CD4-positive, alpha-beta T cell (primary cell): ENCODE measurements at regions of chr6 and their contacts with region 1.

Region 1: GRCh38 chr6:110179401-110180227 is at the start of gene WASF1:
- DNase-seq: peak; percentile 78 to 96 (median 86)
- ATAC-seq: peak; percentile 89
- H3K4me3 ChIP-seq: peak within 1 kb of the TSS; percentile 95
- H3K4me3 Mint-ChIP-seq: peak within 1 kb of the TSS; percentile 84
- H3K27ac ChIP-seq: peak within 1 kb of the TSS; percentile 74 to 78
- H3K27ac Mint-ChIP-seq: peak within 1 kb of the TSS; percentile 16
- H3K4me1 ChIP-seq: peaks cover 28% of the 10 kb centered on the region
- H3K4me1 Mint-ChIP-seq: peaks cover 12% of the 10 kb centered on the region
- H3K27me3 ChIP-seq: peaks cover 0 to 9% of the 10 kb centered on the region in 2 experiments
- H3K27me3 Mint-ChIP-seq: peaks cover 10% of the 10 kb centered on the region
- CTCF ChIP-seq: no peak
- total RNA-seq, gene WASF1: 0.19 to 0.22 TPM

Region 2: GRCh38 chr6:108782179-108783041 is 1397.2 kb before region 1 on chr6:
- CTCF ChIA-PET with region 1: no interaction called
- POLR2A ChIA-PET with region 1: no interaction called
- intact Hi-C with region 1: no loop called
- DNase-seq: peak; percentile 69 to 89 (median 75)
- ATAC-seq: peak; percentile 100
- H3K4me3 ChIP-seq: peak overlapping the region; percentile 45
- H3K4me3 Mint-ChIP-seq: peak overlapping the region; percentile 87
- H3K27ac ChIP-seq: no peak overlapping the region
- H3K27ac Mint-ChIP-seq: no peak overlapping the region
- H3K4me1 ChIP-seq: peaks cover 11% of the 10 kb centered on the region
- H3K4me1 Mint-ChIP-seq: peaks cover 11% of the 10 kb centered on the region
- H3K27me3 ChIP-seq: no peaks in the 10 kb centered on the region
- H3K27me3 Mint-ChIP-seq: no peaks in the 10 kb centered on the region
- CTCF ChIP-seq: peak; percentile 86

Region 3: DNA sequence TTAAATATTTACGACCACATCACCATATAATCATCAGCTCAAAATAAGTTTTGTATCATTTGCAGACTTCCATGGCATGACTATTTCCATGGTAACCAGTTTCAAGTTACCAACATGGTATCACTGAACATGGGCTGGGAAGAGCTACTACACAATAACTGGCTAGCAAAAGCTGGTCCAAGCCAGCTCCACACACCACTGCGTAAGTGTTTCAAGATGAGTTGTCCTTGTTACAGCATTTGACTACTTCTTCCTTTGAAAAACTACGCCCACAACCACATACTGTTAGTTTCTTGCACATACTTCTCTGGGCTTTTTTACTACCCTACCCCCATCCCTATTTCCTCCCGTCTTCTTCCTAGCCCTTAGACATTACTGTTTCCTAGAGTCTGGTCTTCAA is 805.9 kb before region 1 on chr6:
- CTCF ChIA-PET with region 1: no interaction called
- POLR2A ChIA-PET with region 1: no interaction called
- intact Hi-C with region 1: loop called in 1 of 2 experiments (anchors 10 kb)
- DNase-seq: peak in 3 of 14 experiments; percentile 21 to 37 (median 36)
- ATAC-seq: peak; percentile 51
- H3K4me3 ChIP-seq: no peak overlapping the region
- H3K4me3 Mint-ChIP-seq: no peak overlapping the region
- H3K27ac ChIP-seq: no peak overlapping the region
- H3K27ac Mint-ChIP-seq: no peak overlapping the region
- H3K4me1 ChIP-seq: peaks cover 29% of the 10 kb centered on the region
- H3K4me1 Mint-ChIP-seq: peaks cover 81% of the 10 kb centered on the region
- H3K27me3 ChIP-seq: no peaks in the 10 kb centered on the region
- H3K27me3 Mint-ChIP-seq: no peaks in the 10 kb centered on the region
- CTCF ChIP-seq: no peak

Region 4: DNA sequence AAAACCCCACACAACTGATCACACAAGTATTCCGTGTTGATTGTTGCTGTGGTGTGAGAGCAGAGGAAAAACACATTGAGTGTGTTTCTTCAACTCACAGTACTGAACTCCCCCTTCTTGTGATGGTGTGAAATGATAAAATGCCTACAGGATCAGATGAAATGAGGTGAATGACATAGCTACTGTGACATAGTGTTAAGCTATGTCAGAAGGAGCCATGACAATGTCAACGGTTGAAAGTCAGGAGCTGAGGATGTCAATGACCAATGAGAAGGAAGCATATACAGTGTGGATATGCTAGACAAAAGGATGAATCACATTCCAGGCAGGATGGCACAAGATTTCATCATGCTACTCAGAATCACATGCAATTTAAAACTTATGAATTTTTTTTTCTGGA is 39.0 kb before region 1 on chr6:
- CTCF ChIA-PET with region 1: no interaction called
- POLR2A ChIA-PET with region 1: no interaction called
- intact Hi-C with region 1: no loop called
- DNase-seq: no peak
- ATAC-seq: no peak
- H3K4me3 ChIP-seq: no peak overlapping the region
- H3K4me3 Mint-ChIP-seq: no peak overlapping the region
- H3K27ac ChIP-seq: no peak overlapping the region
- H3K27ac Mint-ChIP-seq: no peak overlapping the region
- H3K4me1 ChIP-seq: no peaks in the 10 kb centered on the region
- H3K4me1 Mint-ChIP-seq: no peaks in the 10 kb centered on the region
- H3K27me3 ChIP-seq: peaks cover 0 to 15% of the 10 kb centered on the region in 2 experiments
- H3K27me3 Mint-ChIP-seq: peaks cover 36% of the 10 kb centered on the region
- CTCF ChIP-seq: no peak

Region 5: GRCh38 chr6:110195643-110196042 is 16.0 kb after region 1 on chr6:
- CTCF ChIA-PET with region 1: no interaction called
- POLR2A ChIA-PET with region 1: interaction called, 3 read pairs
- intact Hi-C with region 1: loop called in 1 of 2 experiments (anchors 2 kb)
- DNase-seq: no peak
- ATAC-seq: no peak
- H3K4me3 ChIP-seq: no peak overlapping the region
- H3K4me3 Mint-ChIP-seq: no peak overlapping the region
- H3K27ac ChIP-seq: no peak overlapping the region
- H3K27ac Mint-ChIP-seq: no peak overlapping the region
- H3K4me1 ChIP-seq: peaks cover 2% of the 10 kb centered on the region
- H3K4me1 Mint-ChIP-seq: peaks cover 28% of the 10 kb centered on the region
- H3K27me3 ChIP-seq: no peaks in the 10 kb centered on the region
- H3K27me3 Mint-ChIP-seq: no peaks in the 10 kb centered on the region
- CTCF ChIP-seq: no peak

Region 6: DNA sequence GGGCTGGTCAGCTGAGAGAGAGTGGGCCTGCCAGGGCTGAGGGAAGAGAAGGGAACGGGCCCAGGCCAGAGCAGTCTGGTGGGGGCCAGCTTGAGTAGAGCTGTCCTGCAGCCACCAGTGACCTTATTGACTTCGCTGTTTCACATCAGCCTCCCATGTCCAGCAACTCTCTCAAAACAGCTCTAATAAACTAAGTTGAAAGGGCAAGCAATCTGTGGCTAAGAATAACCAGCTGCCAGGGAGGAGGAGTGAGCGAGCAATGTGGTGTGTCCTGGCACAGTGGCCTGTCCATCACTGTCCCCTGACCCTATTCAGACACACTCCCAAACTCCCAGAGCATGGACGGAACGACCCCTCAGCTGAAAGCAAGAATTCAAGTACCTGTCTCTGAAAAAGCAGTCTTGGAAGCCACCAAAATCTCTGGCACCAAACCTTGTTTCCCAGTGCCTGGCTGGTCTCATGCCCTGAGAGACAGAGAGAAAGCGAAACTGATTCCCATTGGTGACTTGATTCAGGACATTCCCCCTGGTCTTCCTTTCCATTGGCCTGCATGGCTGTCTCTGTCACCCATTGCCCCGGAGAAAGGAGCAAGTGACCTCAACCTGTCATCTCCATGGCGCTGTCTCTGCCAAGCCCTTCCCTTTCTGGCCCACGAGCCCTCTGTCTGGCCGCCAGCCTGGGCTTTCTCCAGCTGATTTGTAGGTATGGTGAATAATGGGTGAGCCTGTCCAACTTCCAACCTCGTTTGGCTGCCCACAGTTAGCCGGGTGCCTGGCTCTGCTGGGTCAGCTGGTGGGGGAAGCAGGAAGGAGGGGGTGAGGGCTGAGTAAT is 235.7 kb after region 1 on chr6 and contains the start of gene DDO:
- CTCF ChIA-PET with region 1: no interaction called
- POLR2A ChIA-PET with region 1: no interaction called
- intact Hi-C with region 1: no loop called
- DNase-seq: peak in 3 of 14 experiments; percentile 12 to 39 (median 13)
- ATAC-seq: no peak
- H3K4me3 ChIP-seq: no peak within 1 kb of the TSS
- H3K4me3 Mint-ChIP-seq: no peak within 1 kb of the TSS
- H3K27ac ChIP-seq: no peak within 1 kb of the TSS
- H3K27ac Mint-ChIP-seq: no peak within 1 kb of the TSS
- H3K4me1 ChIP-seq: no peaks in the 10 kb centered on the region
- H3K4me1 Mint-ChIP-seq: no peaks in the 10 kb centered on the region
- H3K27me3 ChIP-seq: peaks cover 4 to 6% of the 10 kb centered on the region in 2 experiments
- H3K27me3 Mint-ChIP-seq: peaks cover 26% of the 10 kb centered on the region
- CTCF ChIP-seq: no peak
- total RNA-seq, gene DDO: not detected

Region 7: GRCh38 chr6:110430236-110430635 is 250.6 kb after region 1 on chr6:
- CTCF ChIA-PET with region 1: no interaction called
- POLR2A ChIA-PET with region 1: no interaction called
- intact Hi-C with region 1: no loop called
- DNase-seq: no peak
- ATAC-seq: no peak
- H3K4me3 ChIP-seq: no peak overlapping the region
- H3K4me3 Mint-ChIP-seq: no peak overlapping the region
- H3K27ac ChIP-seq: no peak overlapping the region
- H3K27ac Mint-ChIP-seq: no peak overlapping the region
- H3K4me1 ChIP-seq: no peaks in the 10 kb centered on the region
- H3K4me1 Mint-ChIP-seq: no peaks in the 10 kb centered on the region
- H3K27me3 ChIP-seq: no peaks in the 10 kb centered on the region
- H3K27me3 Mint-ChIP-seq: peaks cover 6% of the 10 kb centered on the region
- CTCF ChIP-seq: no peak

Region 8: GRCh38 chr6:110958329-110959192 is 778.9 kb after region 1 on chr6 and contains the start of gene GTF3C6:
- CTCF ChIA-PET with region 1: no interaction called
- POLR2A ChIA-PET with region 1: no interaction called
- intact Hi-C with region 1: loop called in 1 of 2 experiments (anchors 5 kb)
- DNase-seq: peak; percentile 85 to 96 (median 90)
- ATAC-seq: peak; percentile 99
- H3K4me3 ChIP-seq: peak within 1 kb of the TSS; percentile 99
- H3K4me3 Mint-ChIP-seq: peak within 1 kb of the TSS; percentile 99
- H3K27ac ChIP-seq: peak within 1 kb of the TSS; percentile 84 to 90
- H3K27ac Mint-ChIP-seq: peak within 1 kb of the TSS; percentile 89
- H3K4me1 ChIP-seq: peaks cover 17% of the 10 kb centered on the region
- H3K4me1 Mint-ChIP-seq: peaks cover 25% of the 10 kb centered on the region
- H3K27me3 ChIP-seq: no peaks in the 10 kb centered on the region
- H3K27me3 Mint-ChIP-seq: peaks cover 2% of the 10 kb centered on the region
- CTCF ChIP-seq: no peak
- total RNA-seq, gene GTF3C6: 17.9 to 19.2 TPM

Region 9: DNA sequence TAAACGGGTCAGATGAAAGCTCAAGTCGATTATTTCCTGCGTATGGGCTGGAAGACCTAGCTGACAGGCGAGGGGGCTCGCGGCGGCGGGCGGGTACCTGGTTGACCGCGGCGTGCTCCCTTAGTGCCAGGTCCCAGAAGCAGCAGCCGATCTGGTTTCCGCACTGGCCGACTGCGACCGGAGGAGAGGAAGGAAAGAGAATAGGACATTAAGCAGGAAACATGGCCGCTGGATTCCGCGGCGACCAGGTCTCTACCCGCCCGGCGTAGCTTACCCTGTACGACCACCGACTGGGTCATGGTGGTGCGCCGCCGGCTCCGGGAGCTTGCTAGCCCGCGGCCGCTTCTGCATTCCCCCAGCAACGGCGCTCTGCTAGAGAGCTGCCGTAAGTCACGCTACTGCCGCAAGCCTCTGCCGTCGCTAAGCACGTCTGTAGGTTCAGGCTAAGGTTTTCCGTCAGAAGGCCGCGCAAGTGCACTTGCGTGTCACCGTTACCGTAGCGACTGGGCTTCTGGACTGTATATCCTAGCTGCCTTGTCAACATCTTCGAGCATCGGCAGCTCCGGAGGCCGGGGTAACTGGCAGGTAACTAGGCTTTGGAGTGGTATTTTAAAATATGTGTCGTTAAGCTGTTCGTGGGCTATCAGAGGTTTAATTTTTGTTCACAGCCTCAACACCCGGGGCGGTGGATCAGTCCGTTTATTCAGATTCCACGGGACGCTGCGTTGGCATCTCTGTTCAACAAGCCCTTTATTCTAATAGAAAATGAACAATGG is 1907.7 kb after region 1 on chr6 and contains the starts of genes FAM229B and TUBE1:
- CTCF ChIA-PET with region 1: no interaction called
- POLR2A ChIA-PET with region 1: no interaction called
- intact Hi-C with region 1: loop called in 1 of 2 experiments (anchors 10 kb)
- DNase-seq: peak; percentile 81 to 98 (median 84)
- ATAC-seq: peak; percentile 97
- H3K4me3 ChIP-seq: peak within 1 kb of the TSS; percentile 88
- H3K4me3 Mint-ChIP-seq: no peak within 1 kb of the TSS
- H3K27ac ChIP-seq: peak within 1 kb of the TSS; percentile 60 to 84
- H3K27ac Mint-ChIP-seq: no peak within 1 kb of the TSS
- H3K4me1 ChIP-seq: peaks cover 3% of the 10 kb centered on the region
- H3K4me1 Mint-ChIP-seq: peaks cover 11% of the 10 kb centered on the region
- H3K27me3 ChIP-seq: peaks cover 0 to 6% of the 10 kb centered on the region in 2 experiments
- H3K27me3 Mint-ChIP-seq: peaks cover 28% of the 10 kb centered on the region
- CTCF ChIP-seq: no peak
- total RNA-seq, gene FAM229B: 3.6 to 4.4 TPM
- total RNA-seq, gene TUBE1: 28.2 to 30.8 TPM